ENCODE measurements at regions of chr6 and their contacts with region 1.

Region 1: DNA sequence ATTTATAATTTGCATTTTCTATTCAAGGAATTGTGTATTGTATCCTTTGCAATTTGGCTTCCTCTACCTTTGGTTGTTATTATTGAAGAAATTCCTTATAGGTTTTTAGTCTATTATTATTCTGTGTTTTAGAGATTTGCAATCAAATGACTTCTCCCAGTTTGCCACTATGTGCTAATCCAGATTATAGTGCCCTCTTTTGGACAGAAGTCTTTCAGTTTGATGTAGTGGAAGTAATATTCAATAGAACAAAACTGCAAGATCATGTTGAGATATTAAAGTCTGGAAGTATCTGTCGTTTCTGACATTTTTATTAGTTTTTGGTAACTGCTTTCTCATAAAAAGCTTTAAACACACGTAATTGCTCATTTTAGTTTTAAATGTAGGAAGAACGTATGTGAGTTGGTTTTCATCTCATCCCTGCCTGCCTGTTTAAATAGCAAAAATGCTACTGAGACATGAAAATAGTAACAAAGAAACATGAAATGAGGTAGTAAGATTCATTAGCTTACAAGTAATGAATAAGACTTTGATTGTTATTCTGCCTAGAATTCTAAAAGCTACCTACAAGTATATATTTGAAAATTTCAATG is 72.8 kb downstream of the RTN4IP1 start:
- DNase-seq: no peak
- H3K4me3 Mint-ChIP-seq: no peak overlapping the region
- H3K27ac Mint-ChIP-seq: no peak overlapping the region
- H3K4me1 Mint-ChIP-seq: peaks cover 30% of the 10 kb centered on the region
- H3K27me3 Mint-ChIP-seq: no peaks in the 10 kb centered on the region

Region 2: DNA sequence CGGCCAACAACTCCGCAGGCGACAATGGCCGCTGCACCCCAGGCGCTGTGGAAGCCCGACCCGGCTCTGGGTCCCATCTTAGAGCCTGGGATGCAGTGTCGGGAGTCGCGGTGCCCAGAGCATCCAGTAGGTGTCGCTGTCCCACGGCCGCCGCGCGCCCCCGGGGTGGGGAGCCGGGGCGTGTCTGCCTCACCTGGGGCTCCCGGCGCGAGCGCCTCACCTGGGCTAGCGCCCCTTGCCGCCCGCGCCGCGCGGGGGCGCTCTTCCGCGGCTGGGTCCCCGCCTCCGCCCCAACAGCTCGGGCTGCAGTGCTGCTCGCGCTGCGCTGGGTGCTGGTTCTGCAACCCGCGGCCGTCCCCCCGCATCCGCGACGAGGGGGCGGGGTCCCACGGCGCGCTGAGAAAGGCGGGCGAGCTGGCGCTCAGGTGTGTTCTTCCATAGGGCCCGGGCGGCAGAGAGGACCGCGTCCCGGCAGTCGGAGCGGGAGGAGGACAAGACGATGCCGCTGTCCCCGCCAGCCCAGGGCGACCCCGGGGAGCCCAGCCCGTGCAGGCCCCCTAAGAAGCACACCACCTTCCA is 196.0 kb before region 1 on chr6 and contains the start of gene CRYBG1:
- CTCF ChIA-PET with region 1: no interaction called
- POLR2A ChIA-PET with region 1: no interaction called
- intact Hi-C with region 1: loop called (anchors 10 kb)
- DNase-seq: peak; percentile 83
- H3K4me3 Mint-ChIP-seq: peak within 1 kb of the TSS; percentile 68
- H3K27ac Mint-ChIP-seq: no peak within 1 kb of the TSS
- H3K4me1 Mint-ChIP-seq: peaks cover 9% of the 10 kb centered on the region
- H3K27me3 Mint-ChIP-seq: peaks cover 37% of the 10 kb centered on the region
- total RNA-seq, gene CRYBG1: 38.4 to 39.3 TPM

Region 3: GRCh38 chr6:106477790-106478189 is 78.7 kb before region 1 on chr6:
- CTCF ChIA-PET with region 1: interaction called, 3 read pairs
- POLR2A ChIA-PET with region 1: interaction called, 3 read pairs
- intact Hi-C with region 1: loop called (anchors 1 kb)
- DNase-seq: no peak
- H3K4me3 Mint-ChIP-seq: no peak overlapping the region
- H3K27ac Mint-ChIP-seq: no peak overlapping the region
- H3K4me1 Mint-ChIP-seq: peaks cover 9% of the 10 kb centered on the region
- H3K27me3 Mint-ChIP-seq: no peaks in the 10 kb centered on the region

Region 4: DNA sequence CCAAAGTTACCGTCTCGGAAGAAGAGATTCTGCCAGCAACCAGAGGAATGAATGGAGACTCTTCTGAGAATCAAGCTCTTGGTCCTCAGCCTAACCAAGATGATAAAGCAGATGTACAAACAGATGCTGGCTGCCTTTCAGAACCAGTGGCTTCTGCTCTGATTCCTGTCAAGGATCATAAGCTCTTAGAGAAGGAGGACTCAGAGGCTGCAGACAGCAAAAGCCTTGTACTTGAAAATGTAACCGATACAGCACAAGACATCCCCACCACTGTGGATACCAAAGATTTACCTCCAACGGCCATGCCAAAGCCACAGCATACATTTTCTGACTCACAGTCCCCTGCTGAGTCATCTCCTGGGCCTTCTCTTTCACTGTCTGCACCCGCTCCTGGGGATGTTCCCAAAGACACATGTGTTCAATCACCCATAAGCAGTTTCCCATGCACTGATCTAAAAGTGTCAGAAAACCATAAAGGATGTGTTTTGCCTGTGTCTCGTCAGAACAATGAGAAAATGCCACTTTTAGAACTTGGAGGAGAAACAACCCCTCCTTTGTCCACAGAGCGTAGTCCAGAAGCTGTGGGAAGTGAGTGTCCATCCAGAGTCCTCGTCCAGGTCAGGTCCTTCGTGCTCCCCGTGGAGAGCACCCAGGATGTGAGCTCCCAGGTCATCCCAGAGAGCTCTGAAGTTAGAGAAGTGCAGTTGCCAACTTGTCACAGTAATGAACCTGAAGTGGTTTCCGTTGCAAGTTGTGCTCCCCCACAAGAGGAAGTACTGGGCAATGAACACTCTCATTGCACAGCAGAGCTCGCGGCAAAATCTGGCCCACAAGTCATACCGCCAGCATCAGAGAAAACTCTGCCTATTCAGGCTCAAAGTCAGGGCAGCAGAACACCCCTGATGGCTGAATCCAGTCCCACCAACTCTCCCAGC is 36.7 kb before region 1 on chr6:
- CTCF ChIA-PET with region 1: interaction called, 37 read pairs
- POLR2A ChIA-PET with region 1: interaction called, 24 read pairs
- intact Hi-C with region 1: loop called (anchors 1 kb)
- DNase-seq: peak; percentile 92
- H3K4me3 Mint-ChIP-seq: peak overlapping the region; percentile 76
- H3K27ac Mint-ChIP-seq: peak overlapping the region; percentile 99
- H3K4me1 Mint-ChIP-seq: peaks cover 67% of the 10 kb centered on the region
- H3K27me3 Mint-ChIP-seq: no peaks in the 10 kb centered on the region

Region 5: GRCh38 chr6:106525111-106525881 is 31.2 kb before region 1 on chr6:
- CTCF ChIA-PET with region 1: interaction called, 11 read pairs
- POLR2A ChIA-PET with region 1: interaction called, 24 read pairs
- intact Hi-C with region 1: loop called (anchors 1 kb)
- DNase-seq: no peak
- H3K4me3 Mint-ChIP-seq: peak overlapping the region; percentile 82
- H3K27ac Mint-ChIP-seq: peak overlapping the region; percentile 94
- H3K4me1 Mint-ChIP-seq: peaks cover 74% of the 10 kb centered on the region
- H3K27me3 Mint-ChIP-seq: no peaks in the 10 kb centered on the region

Region 6: DNA sequence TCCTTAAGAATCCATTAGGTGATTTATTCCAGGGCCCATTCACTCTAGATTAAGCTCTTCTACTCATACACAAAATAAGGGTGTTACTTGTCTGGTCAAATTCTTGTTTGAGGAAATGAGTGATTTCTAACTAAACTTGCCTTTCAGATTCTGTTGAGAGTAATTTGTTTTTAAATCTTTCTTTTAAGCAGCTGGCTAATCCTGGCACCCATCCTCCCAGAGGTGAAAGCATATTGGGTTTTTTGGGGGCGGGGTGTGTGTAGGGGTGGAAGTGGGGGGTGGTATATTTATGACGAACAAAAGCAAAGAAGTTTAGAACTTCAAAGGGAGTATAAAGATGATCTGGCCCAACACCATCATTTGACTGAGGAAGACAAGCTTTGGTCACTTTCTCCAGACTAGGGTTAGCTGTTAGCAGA is 21.9 kb before region 1 on chr6:
- CTCF ChIA-PET with region 1: interaction called, 4 read pairs
- POLR2A ChIA-PET with region 1: interaction called, 11 read pairs
- intact Hi-C with region 1: loop called (anchors 1 kb)
- DNase-seq: peak; percentile 84
- H3K4me3 Mint-ChIP-seq: peak overlapping the region; percentile 17
- H3K27ac Mint-ChIP-seq: peak overlapping the region; percentile 92
- H3K4me1 Mint-ChIP-seq: peaks cover 85% of the 10 kb centered on the region
- H3K27me3 Mint-ChIP-seq: no peaks in the 10 kb centered on the region